ENCODE measurements at regions of chr3 and their contacts with region 1.

Region 1: GRCh38 chr3:59049671-59050331 is at the start of gene CFAP20DC:
- DNase-seq: peak; percentile 96
- ATAC-seq: peak; percentile 99 to 100
- total RNA-seq, gene CFAP20DC: 0.08 to 0.24 TPM

Region 2: DNA sequence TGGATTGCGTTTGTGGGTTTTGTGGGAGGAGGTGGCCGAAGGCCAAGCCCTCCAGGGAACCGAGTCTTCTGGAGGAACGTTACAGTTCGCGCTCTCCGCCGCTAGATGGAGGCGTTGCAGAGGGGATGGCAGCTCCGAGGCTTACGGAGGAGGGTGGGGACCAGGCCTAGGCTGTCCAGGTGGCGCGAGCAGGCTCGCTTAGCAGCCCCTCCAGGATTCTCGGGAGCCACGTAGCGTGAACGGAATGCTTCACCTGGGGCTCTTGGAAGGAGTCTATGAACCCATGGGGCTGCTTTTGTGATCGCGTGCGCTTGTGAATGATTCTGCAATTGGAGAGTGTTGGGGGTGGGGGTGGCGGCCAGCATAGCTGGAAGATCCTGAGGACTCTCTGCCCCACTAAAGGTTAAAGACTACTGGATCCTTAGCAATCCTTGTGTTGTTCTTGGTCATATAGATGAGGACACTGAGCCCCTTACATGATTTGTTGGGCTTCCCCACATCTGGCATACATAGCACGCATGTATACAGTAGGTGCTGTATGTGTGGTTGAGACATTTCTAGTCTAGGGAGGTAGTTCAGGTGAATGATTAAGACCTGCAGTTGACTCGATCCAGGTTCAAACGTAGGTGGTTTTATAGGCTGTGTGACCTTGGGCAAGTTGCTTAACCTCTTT is 409.0 kb before region 1 on chr3:
- intact Hi-C with region 1: loop called in 1 of 2 experiments (anchors 5 kb)
- DNase-seq: peak; percentile 83
- ATAC-seq: peak; percentile 88 to 90

Region 3: DNA sequence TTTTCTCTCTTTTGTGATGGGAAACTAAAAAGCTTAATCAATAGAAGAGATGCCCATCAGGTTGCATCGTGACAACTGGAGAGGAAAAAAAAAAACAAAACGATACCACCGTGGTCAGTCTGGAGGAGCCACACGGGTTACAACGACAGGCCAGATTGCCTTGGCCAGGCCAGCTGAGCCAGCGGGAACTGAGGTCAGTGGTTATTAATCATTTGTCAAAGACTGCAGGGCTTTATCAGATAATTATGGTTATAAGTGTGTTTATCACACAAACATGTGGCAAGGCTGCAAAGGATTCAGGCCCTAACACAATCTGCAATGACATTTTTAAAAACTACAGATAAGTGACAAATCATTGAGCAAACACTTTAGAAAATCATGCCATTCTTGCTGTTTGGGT is 248.3 kb before region 1 on chr3:
- intact Hi-C with region 1: no loop called
- DNase-seq: no peak
- ATAC-seq: no peak

Region 4: DNA sequence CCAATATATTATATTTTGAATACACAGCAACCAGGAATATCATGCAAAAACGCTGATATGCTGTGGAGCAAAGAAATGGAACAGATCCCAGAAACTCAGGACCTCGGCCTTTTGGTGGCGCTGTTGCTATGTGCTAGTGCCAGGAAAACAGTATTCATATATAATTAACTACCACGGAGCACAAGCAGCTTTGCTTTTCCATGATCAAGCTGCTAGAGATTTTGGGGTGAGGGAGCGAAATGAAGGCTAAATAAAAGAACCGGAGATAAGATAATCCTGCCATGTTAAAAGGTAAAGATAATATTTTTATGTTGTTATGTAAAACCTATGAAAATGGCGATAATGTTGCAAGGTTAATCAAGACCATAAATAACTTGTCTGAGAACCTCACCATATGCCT is 225.5 kb before region 1 on chr3:
- intact Hi-C with region 1: loop called in 1 of 2 experiments (anchors 2 kb)
- DNase-seq: peak; percentile 46
- ATAC-seq: no peak

Region 5: DNA sequence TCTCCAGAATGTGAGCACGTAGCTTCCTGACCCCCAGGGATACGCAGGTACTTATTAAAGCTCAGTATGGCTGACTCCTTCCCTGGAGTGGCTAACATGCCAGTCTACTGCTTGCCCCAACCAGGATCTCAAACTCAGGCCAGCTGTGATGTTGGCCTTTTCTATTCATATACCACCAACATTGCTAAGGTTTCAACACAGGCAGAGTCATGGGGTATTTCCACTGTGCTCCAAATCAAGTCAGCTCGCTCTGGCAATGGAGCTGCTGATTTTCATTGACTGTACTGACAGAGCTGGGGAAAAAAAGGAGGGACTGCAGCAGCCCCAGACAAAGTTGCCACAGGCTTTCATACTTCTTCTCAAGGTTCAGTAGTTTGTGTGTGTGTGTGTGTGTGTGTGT is 87.0 kb before region 1 on chr3:
- intact Hi-C with region 1: no loop called
- DNase-seq: no peak
- ATAC-seq: no peak

Region 6: GRCh38 chr3:59957150-59957549 is 907.3 kb after region 1 on chr3:
- intact Hi-C with region 1: no loop called
- DNase-seq: no peak
- ATAC-seq: no peak